B cell (primary cell): ENCODE measurements at regions of chr12 and their contacts with region 1.

Region 1: GRCh38 chr12:6688999-6689882 is at the start of gene ZNF384:
- DNase-seq: peak; percentile 99
- ATAC-seq: peak; percentile 76
- H3K4me3 ChIP-seq: peak within 1 kb of the TSS; percentile 53 to 95 (median 93)
- H3K4me3 Mint-ChIP-seq: peak within 1 kb of the TSS; percentile 94
- H3K27ac ChIP-seq: peak within 1 kb of the TSS; percentile 75 to 91
- H3K27ac Mint-ChIP-seq: peak within 1 kb of the TSS; percentile 97
- H3K4me1 ChIP-seq: peaks cover 28 to 29% of the 10 kb centered on the region in 2 donors
- H3K4me1 Mint-ChIP-seq: peaks cover 55% of the 10 kb centered on the region
- H3K27me3 ChIP-seq: no peaks in the 10 kb centered on the region
- H3K27me3 Mint-ChIP-seq: no peaks in the 10 kb centered on the region
- CTCF ChIP-seq: no peak
- total RNA-seq, gene ZNF384: 108 and 115 TPM in 2 replicates

Region 2: DNA sequence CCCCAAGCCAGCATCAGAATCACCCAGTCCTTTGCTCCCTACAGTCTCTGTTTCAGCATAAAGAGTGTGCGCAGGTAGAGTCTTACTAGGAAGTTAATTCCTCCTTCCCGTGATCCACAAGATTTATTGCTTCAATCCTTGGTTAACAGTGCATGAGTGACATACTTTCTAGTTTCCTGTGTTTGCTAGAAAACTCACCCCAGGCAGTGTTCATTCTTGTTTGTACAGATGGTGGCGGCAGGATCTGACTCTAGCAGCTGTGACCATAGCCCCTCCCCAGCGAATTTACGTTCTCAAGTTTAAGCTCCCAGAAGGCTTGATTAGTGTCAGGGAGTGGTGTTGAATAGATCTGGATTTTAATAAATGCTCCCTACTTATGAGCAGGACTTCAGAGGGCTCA is 668.3 kb before region 1 on chr12:
- CTCF ChIA-PET with region 1: no interaction called
- POLR2A ChIA-PET with region 1: no interaction called
- intact Hi-C with region 1: no loop called
- DNase-seq: no peak
- ATAC-seq: no peak
- H3K4me3 ChIP-seq: no peak overlapping the region
- H3K4me3 Mint-ChIP-seq: no peak overlapping the region
- H3K27ac ChIP-seq: no peak overlapping the region
- H3K27ac Mint-ChIP-seq: no peak overlapping the region
- H3K4me1 ChIP-seq: no peaks in the 10 kb centered on the region
- H3K4me1 Mint-ChIP-seq: no peaks in the 10 kb centered on the region
- H3K27me3 ChIP-seq: no peaks in the 10 kb centered on the region
- H3K27me3 Mint-ChIP-seq: peaks cover 22% of the 10 kb centered on the region
- CTCF ChIP-seq: no peak

Region 3: GRCh38 chr12:6563448-6564050 is 125.7 kb before region 1 on chr12:
- CTCF ChIA-PET with region 1: interaction called, 19 read pairs
- POLR2A ChIA-PET with region 1: no interaction called
- intact Hi-C with region 1: loop called (anchors 1 kb)
- DNase-seq: peak; percentile 76
- ATAC-seq: peak; percentile 28
- H3K4me3 ChIP-seq: no peak overlapping the region
- H3K4me3 Mint-ChIP-seq: no peak overlapping the region
- H3K27ac ChIP-seq: no peak overlapping the region
- H3K27ac Mint-ChIP-seq: peak overlapping the region; percentile 10
- H3K4me1 ChIP-seq: peaks cover 7 to 13% of the 10 kb centered on the region in 2 donors
- H3K4me1 Mint-ChIP-seq: peaks cover 28% of the 10 kb centered on the region
- H3K27me3 ChIP-seq: no peaks in the 10 kb centered on the region
- H3K27me3 Mint-ChIP-seq: no peaks in the 10 kb centered on the region
- CTCF ChIP-seq: peak; percentile 95

Region 4: GRCh38 chr12:6620137-6620884 is 68.9 kb before region 1 on chr12:
- CTCF ChIA-PET with region 1: interaction called, 19 read pairs
- POLR2A ChIA-PET with region 1: interaction called, 3 read pairs
- intact Hi-C with region 1: loop called (anchors 1 kb)
- DNase-seq: peak; percentile 74
- ATAC-seq: peak; percentile 46
- H3K4me3 ChIP-seq: no peak overlapping the region
- H3K4me3 Mint-ChIP-seq: peak overlapping the region; percentile 45
- H3K27ac ChIP-seq: peak overlapping the region in 1 of 2 donors; percentile 28
- H3K27ac Mint-ChIP-seq: peak overlapping the region; percentile 72
- H3K4me1 ChIP-seq: peaks cover 3 to 30% of the 10 kb centered on the region in 2 donors
- H3K4me1 Mint-ChIP-seq: peaks cover 41% of the 10 kb centered on the region
- H3K27me3 ChIP-seq: no peaks in the 10 kb centered on the region
- H3K27me3 Mint-ChIP-seq: no peaks in the 10 kb centered on the region
- CTCF ChIP-seq: peak; percentile 66

Region 5: DNA sequence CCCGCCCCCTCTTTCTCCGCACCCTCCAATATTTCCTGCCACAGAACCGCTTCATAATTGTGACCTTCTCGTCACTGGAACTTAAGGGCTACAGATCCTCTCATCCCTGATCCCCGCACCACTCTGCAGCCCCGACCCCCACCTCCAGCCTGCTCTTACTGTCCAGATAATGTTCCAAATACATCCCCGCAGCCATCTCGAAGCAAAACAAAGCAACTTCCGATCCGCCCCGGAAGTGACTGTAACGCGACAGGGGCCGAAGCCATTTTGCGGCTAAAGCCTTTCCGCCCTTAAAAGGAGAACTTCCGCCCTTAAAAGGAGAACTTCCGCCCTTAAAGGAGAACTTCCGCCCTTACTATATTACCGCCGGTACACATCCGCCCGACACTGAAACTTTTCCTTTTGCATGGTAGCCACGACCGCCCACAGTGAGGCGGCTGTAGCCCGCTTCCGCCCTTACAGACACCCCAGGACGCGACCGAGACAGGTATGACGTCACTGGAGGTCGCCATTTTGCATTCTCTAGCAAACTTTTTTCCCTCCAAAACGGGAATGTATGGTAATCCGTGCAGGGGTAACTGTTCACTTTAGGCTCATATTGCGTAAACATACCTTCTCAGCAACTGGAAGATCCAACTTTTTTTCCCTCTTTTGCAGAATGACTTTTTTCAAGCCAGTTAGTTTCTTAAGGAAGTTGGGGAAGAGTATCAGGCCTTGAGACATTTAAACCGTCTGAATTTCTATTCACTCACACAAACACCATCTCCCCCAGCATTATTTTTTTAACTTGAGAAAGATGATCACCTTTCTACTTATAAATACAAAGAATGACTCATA is 26.1 kb before region 1 on chr12 and contains the start of gene ING4:
- CTCF ChIA-PET with region 1: interaction called, 10 read pairs
- POLR2A ChIA-PET with region 1: interaction called, 13 read pairs
- intact Hi-C with region 1: loop called (anchors 1 kb)
- DNase-seq: peak; percentile 99
- ATAC-seq: peak; percentile 98
- H3K4me3 ChIP-seq: peak within 1 kb of the TSS; percentile 62 to 94 (median 90)
- H3K4me3 Mint-ChIP-seq: peak within 1 kb of the TSS; percentile 93
- H3K27ac ChIP-seq: peak within 1 kb of the TSS; percentile 64 to 91
- H3K27ac Mint-ChIP-seq: peak within 1 kb of the TSS; percentile 92
- H3K4me1 ChIP-seq: peaks cover 15 to 19% of the 10 kb centered on the region in 2 donors
- H3K4me1 Mint-ChIP-seq: peaks cover 27% of the 10 kb centered on the region
- H3K27me3 ChIP-seq: no peaks in the 10 kb centered on the region
- H3K27me3 Mint-ChIP-seq: no peaks in the 10 kb centered on the region
- CTCF ChIP-seq: no peak
- total RNA-seq, gene ING4: 81.1 TPM in 2 replicates

Region 6: GRCh38 chr12:6764011-6764828 is 75.0 kb after region 1 on chr12:
- CTCF ChIA-PET with region 1: interaction called, 7 read pairs
- POLR2A ChIA-PET with region 1: interaction called, 11 read pairs
- intact Hi-C with region 1: no loop called
- DNase-seq: peak; percentile 80
- ATAC-seq: peak; percentile 72
- H3K4me3 ChIP-seq: peak overlapping the region in 1 of 5 experiments; percentile 14
- H3K4me3 Mint-ChIP-seq: peak overlapping the region; percentile 61
- H3K27ac ChIP-seq: no peak overlapping the region
- H3K27ac Mint-ChIP-seq: peak overlapping the region; percentile 28
- H3K4me1 ChIP-seq: peaks cover 33 to 36% of the 10 kb centered on the region in 2 donors
- H3K4me1 Mint-ChIP-seq: peaks cover 29% of the 10 kb centered on the region
- H3K27me3 ChIP-seq: peaks cover 0 to 44% (median 27%) of the 10 kb centered on the region in 4 experiments
- H3K27me3 Mint-ChIP-seq: peaks cover 43% of the 10 kb centered on the region
- CTCF ChIP-seq: no peak

Region 7: GRCh38 chr12:6851921-6852650 is 162.8 kb after region 1 on chr12 and contains the start of gene USP5:
- CTCF ChIA-PET with region 1: no interaction called
- POLR2A ChIA-PET with region 1: interaction called, 13 read pairs
- intact Hi-C with region 1: no loop called
- DNase-seq: peak; percentile 100
- ATAC-seq: peak; percentile 76
- H3K4me3 ChIP-seq: peak within 1 kb of the TSS; percentile 85 to 98 (median 92)
- H3K4me3 Mint-ChIP-seq: peak within 1 kb of the TSS; percentile 92
- H3K27ac ChIP-seq: peak within 1 kb of the TSS; percentile 91
- H3K27ac Mint-ChIP-seq: peak within 1 kb of the TSS; percentile 93
- H3K4me1 ChIP-seq: peaks cover 6 to 23% of the 10 kb centered on the region in 2 donors
- H3K4me1 Mint-ChIP-seq: peaks cover 23% of the 10 kb centered on the region
- H3K27me3 ChIP-seq: no peaks in the 10 kb centered on the region
- H3K27me3 Mint-ChIP-seq: no peaks in the 10 kb centered on the region
- CTCF ChIP-seq: no peak
- total RNA-seq, gene USP5: 56.8 and 59.7 TPM in 2 replicates